ENCODE measurements at regions of chr7 and their contacts with region 1.

Region 1: DNA sequence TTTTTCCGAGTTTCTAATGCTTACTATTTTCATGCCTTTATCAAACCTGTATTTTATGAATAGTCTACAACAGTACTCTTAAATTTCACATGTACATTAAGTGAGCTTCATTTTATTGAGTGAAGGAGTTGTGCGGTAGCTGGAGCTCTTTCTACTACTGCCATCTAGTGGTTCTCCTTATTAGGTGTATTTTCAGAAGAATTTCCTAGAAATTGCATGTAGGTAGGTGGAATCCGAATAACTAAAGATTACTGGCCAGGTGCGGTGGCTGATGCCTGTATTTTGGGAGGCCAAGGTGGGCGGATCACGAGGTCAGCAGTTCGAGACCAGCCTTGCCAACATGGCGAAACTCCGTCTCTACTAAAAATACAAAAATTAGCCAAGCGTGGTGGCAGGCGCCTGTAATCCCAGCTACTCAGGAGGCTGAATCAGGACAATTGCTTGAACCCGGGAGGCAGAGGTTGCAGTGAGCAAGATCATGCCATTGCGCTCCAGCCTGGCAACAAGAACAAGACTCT is 38.3 kb downstream of the LRRC72 start:
- DNase-seq: no peak
- ATAC-seq: peak in 1 of 2 donors; percentile 44
- H3K4me3 ChIP-seq: no peak overlapping the region
- H3K27ac ChIP-seq: no peak overlapping the region
- H3K4me1 ChIP-seq: no peaks in the 10 kb centered on the region
- H3K27me3 ChIP-seq: no peaks in the 10 kb centered on the region
- CTCF ChIP-seq: peak in 4 of 5 experiments; percentile 41 to 75 (median 67)
- POLR2A ChIP-seq: no peak

Region 2: DNA sequence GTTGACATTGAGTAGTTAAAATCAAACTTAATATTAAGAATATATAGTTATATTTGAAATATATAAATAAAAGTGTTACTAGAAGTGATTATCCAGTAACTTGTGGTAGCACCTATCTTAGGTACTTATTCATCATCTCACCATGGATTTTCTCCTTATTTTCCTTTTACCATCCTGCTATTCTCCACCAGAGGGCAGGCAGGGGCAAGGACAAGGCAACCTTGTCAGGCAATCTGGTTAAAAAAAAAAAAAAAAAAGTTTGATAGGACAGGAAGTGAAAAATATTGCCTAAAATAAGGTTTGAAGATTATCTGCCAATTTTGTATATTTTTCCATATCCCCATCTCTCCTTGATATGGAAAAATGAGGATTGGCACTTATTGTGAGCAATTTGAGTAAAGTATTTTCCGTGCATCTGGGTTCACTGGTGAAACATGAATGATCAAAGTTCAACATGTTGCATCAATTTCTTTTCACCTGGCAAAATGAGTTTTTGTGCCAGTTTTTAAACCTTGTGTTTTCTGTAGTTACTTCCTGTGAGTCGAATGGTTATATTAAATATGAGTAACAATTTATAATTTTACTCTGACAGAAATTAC is 1259.9 kb before region 1 on chr7:
- in situ Hi-C with region 1: loop called in 1 of 4 experiments (anchors 25 kb)
- intact Hi-C with region 1: no loop called
- DNase-seq: no peak
- ATAC-seq: no peak
- H3K4me3 ChIP-seq: no peak overlapping the region
- H3K27ac ChIP-seq: no peak overlapping the region
- H3K4me1 ChIP-seq: no peaks in the 10 kb centered on the region
- H3K27me3 ChIP-seq: no peaks in the 10 kb centered on the region
- CTCF ChIP-seq: peak; percentile 26 to 68 (median 40)
- POLR2A ChIP-seq: no peak

Region 3: DNA sequence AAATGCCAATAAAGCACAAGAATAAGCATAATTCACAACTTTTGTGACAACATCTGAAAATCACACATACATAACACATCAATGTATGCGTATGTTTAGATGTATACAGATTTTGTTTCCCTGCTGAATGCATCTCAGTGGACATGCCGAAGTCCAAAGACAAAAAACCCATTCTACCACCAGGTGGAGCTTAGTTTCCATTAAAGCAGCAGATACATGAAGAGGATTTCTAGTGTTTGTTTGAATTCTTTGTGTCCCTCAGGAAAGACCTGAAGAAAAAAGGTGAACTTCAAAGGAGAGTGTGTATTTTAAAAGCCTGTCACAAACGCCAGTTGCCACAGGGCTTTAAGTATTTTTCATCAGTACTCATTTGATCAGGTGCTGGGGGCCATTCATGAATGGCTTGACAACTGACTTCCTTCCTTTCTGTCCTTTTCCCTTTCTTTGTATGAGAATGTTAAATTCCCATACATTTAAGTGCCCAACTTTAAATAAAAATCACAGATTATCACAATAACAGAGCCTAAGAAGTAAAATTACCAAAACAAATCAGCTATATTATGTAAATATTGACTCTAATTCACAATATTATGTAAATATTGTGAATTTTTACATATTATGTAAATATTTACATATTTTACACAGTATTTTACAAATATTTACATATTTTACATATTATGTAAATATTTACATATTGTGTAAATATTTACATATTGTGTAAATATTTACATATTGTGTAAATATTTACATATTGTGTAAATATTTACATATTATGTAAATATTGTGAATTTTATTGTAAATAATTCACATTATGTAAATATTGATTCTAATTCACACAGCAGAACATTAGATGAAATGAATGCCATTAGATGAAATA is 486.7 kb before region 1 on chr7:
- in situ Hi-C with region 1: loop called in 3 of 4 experiments (anchors 5 to 10 kb)
- intact Hi-C with region 1: loop called (anchors 2 kb)
- DNase-seq: no peak
- ATAC-seq: no peak
- H3K4me3 ChIP-seq: no peak overlapping the region
- H3K27ac ChIP-seq: no peak overlapping the region
- H3K4me1 ChIP-seq: no peaks in the 10 kb centered on the region
- H3K27me3 ChIP-seq: no peaks in the 10 kb centered on the region
- CTCF ChIP-seq: peak; percentile 19 to 64 (median 50)
- POLR2A ChIP-seq: no peak

Region 4: DNA sequence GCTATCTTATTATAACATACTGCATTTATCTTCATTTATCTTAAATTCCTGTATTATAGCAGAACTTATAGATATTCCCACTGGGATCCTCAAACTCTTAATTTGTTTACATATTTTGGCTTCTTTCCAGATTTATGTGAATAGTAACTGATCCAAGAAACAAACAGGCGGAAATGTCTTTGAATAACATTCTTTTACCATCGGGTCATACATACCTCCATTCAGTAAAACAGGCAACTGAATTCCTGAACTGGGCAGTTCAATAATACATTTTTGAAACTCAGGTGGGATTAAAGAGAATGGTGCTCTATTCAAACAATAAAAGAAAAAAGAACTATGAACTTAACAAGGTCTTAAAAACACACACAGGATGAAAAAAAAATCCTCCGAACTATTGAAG is 481.0 kb before region 1 on chr7:
- in situ Hi-C with region 1: loop called in 3 of 4 experiments (anchors 5 to 10 kb)
- intact Hi-C with region 1: loop called (anchors 2 kb)
- DNase-seq: no peak
- ATAC-seq: no peak
- H3K4me3 ChIP-seq: no peak overlapping the region
- H3K27ac ChIP-seq: no peak overlapping the region
- H3K4me1 ChIP-seq: no peaks in the 10 kb centered on the region
- H3K27me3 ChIP-seq: no peaks in the 10 kb centered on the region
- CTCF ChIP-seq: no peak
- POLR2A ChIP-seq: no peak

Region 5: GRCh38 chr7:16465469-16466361 is 99.3 kb before region 1 on chr7 and contains the start of gene SOSTDC1:
- in situ Hi-C with region 1: loop called in 1 of 4 experiments (anchors 25 kb)
- intact Hi-C with region 1: no loop called
- DNase-seq: no peak
- ATAC-seq: no peak
- H3K4me3 ChIP-seq: no peak within 1 kb of the TSS
- H3K27ac ChIP-seq: no peak within 1 kb of the TSS
- H3K4me1 ChIP-seq: no peaks in the 10 kb centered on the region
- H3K27me3 ChIP-seq: no peaks in the 10 kb centered on the region
- CTCF ChIP-seq: no peak
- POLR2A ChIP-seq: no peak
- total RNA-seq, gene SOSTDC1: not detected

Measured in gastrocnemius medialis (tissue), 4 donors.